ENCODE measurements at regions of chr21 and their contacts with region 1.

Region 1: DNA sequence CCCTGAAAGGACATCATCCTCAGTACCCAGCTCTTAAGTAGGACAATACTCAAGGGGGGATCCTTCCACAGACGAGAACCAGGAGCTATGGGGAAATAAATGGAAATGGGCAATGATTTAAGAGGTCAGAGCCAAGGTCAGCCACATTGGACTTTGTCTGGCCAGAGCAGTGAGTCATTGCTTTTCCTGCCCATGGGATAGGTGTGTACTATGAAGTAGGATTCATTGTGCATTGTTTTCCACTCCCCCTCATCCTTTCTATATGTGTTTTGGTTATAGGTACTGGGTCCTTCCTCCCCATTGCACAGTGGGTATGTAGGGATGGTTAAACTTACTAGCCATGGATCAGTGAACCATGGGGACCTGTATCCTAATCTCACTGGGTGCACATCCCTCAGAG is 328.9 kb upstream of the USP25 start:
- DNase-seq: no peak
- ATAC-seq: no peak
- H3K4me3 ChIP-seq: no peak overlapping the region
- H3K27ac ChIP-seq: no peak overlapping the region
- H3K4me1 ChIP-seq: peaks cover 1% of the 10 kb centered on the region
- H3K27me3 ChIP-seq: no peaks in the 10 kb centered on the region

Region 2: GRCh38 chr21:15445327-15445726 is 44.4 kb after region 1 on chr21:
- intact Hi-C with region 1: loop called in 1 of 4 experiments (anchors 2 kb)
- DNase-seq: no peak
- ATAC-seq: peak in 1 of 2 donors; percentile 31
- H3K4me3 ChIP-seq: no peak overlapping the region
- H3K27ac ChIP-seq: no peak overlapping the region
- H3K4me1 ChIP-seq: peaks cover 2% of the 10 kb centered on the region
- H3K27me3 ChIP-seq: no peaks in the 10 kb centered on the region

Measured in right cardiac atrium (tissue), 5 donors.